GM10248 (cell line): ENCODE measurements at regions of chr6 and their contacts with region 1.

Region 1: GRCh38 chr6:113909234-113909856 is 52.2 kb downstream of the MARCKS start:
- DNase-seq: peak; percentile 60
- CTCF ChIP-seq: peak; percentile 33

Region 2: DNA sequence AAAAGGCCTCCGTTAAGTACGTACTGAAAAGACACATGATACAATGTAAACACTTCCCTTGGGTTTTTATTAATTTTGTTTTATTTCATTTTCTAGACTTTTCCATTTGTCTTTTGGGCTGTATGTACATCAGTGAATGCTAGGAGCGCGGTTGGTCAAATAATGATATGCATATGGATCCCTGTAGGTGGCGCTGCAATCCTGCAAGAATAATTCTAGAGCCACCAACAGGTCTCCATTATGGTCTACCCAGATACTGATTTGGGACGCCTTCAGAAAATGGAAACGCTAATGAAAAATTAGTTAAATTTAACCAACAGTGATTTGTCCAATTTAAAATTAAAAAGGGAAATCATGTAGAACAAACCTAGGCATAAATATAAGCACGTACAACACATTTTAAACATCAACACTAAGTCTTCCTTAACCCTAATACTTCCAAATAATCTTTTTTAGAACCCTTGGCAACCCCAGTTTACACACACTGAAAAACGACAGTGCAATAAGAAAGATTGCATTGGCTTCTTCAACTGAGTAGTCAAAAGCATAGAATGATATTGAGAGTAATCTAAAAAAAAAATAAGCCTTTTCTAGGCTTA is 1128.7 kb before region 1 on chr6:
- CTCF ChIA-PET with region 1: interaction called, 31 read pairs
- POLR2A ChIA-PET with region 1: no interaction called
- DNase-seq: peak; percentile 47
- CTCF ChIP-seq: peak; percentile 57

Region 3: GRCh38 chr6:113796038-113796437 is 113.3 kb before region 1 on chr6:
- CTCF ChIA-PET with region 1: no interaction called
- POLR2A ChIA-PET with region 1: no interaction called
- DNase-seq: no peak
- CTCF ChIP-seq: no peak

Region 4: DNA sequence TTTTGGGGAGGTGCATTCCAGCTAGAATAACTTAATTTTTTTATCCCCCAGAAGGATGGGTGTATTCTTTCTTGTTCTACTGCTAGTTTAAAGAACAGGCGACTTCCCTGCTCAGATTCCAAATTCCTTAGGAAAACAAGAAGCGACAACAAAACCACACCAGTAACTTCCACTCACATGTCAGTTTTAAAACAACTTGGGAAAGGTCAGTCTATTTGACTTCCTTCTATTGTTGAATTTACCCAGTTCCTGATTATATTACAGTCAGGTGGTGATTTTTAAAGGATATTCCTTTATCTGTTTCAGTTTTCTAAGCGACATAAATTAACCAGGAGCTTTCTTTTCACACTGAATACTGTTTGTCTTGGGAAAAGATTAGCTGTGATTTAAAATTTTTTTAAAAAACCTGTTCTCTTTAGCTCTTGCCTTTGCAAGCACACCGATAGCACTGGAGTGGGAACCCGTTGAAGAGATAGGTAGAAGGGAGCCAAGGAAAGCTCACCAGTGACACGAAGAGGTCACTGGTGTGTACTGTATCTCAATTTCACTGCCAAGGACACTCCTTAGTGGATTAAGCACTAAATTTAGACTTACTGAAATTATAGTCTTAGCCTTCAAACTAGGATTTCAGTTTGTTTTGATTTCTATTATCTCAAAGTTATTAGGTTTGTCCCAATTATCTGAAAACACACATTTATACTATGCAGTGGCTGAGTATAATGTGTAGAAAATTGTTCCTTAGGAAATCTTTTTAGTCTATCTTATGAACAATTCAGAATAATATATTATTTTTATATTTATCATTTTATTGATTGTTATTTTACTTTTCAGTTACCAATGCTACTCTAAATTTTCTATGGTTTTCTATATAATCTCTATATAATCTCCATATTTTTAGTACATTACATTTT is 29.9 kb before region 1 on chr6:
- CTCF ChIA-PET with region 1: interaction called, 10 read pairs
- POLR2A ChIA-PET with region 1: no interaction called
- DNase-seq: peak; percentile 52
- CTCF ChIP-seq: peak; percentile 81

Region 5: DNA sequence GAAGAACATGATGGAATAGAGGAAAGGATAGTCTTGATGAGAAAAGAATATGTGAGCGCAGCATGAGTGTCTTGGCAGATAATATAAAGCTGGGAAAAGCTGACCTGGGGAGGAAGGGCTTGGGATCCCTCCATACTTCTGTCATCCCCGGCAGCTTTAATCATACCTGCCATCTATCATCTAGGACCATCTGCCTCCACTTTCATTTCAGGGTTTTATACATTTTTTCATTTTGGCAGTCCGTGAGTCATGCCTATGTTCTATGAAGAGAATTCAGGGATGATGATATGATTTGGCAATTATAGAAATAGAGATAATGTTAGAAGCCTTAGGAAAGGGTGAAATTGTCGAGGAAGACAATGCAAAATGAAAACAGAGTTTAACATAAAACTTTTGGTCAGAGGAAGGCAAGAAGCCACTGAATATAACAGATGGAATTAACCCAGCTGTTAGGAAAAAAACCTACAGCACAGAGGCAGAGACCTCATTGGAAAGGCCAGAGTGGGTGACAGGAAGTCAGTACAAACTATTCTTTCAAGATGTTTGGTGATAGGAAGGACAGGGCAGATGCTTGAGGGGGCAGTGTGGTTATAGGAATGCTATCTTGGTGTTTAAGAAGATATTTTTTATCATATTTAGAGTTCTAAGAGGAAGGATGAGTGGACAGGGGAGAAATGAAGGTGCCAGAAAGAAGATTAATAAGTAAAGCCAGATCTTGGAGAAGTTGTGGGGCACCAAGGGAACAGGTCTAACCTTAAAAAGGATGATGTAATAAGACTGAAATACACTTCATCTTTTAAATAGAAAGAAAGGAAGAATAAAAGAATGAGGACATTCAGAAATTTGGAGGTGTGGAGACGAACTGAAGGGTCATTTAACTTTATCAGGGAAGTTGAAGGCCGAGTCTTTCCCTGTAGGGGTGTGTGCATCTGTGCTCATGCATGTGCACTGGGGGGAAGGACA is 14.4 kb before region 1 on chr6:
- CTCF ChIA-PET with region 1: interaction called, 47 read pairs
- POLR2A ChIA-PET with region 1: interaction called, 7 read pairs
- DNase-seq: no peak
- CTCF ChIP-seq: no peak

Region 6: GRCh38 chr6:113936093-113936934 is 27.0 kb after region 1 on chr6:
- CTCF ChIA-PET with region 1: interaction called, 16 read pairs
- POLR2A ChIA-PET with region 1: no interaction called
- DNase-seq: peak; percentile 37
- CTCF ChIP-seq: peak; percentile 69